Activated CD8-positive, alpha-beta T cell treated with anti-CD3 and anti-CD28 coated beads for 36 hours (primary cell): ENCODE measurements at regions of chr6 and their contacts with region 1.

Region 1: GRCh38 chr6:107704347-107705013 is 119.6 kb downstream of the SCML4 start:
- DNase-seq: peak; percentile 43
- ATAC-seq: peak; percentile 47
- H3K4me3 Mint-ChIP-seq: no peak overlapping the region
- H3K27ac Mint-ChIP-seq: peak overlapping the region; percentile 58
- H3K4me1 Mint-ChIP-seq: peaks cover 16% of the 10 kb centered on the region
- H3K27me3 Mint-ChIP-seq: no peaks in the 10 kb centered on the region
- CTCF ChIP-seq: peak; percentile 94

Region 2: DNA sequence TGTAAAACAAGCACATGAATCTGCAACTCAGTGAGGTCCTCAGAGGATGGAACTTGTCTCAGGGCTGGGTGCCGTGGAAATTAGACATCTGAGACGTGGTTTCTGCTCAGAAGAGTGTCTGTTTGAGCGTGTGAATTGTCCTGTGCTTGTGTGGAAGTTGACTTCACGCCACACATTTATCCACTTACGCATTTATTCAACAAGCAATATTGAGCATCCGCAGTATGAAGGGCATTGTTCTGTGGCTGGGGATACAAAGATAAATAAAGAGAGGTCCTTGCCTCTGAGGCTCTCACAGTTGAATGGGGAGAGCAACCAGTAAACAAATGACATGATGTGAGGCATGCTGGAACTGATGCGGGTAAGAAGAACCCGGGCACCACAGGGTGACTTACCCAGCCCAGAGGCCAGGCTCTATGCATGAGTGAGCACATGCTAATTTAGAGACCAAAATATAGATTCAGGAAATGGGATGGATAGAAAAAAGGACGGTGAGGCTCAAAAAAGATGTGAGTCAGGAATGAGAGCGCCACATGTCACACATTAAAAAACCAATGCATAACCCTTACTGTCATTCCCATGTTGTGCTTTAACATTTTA is 154.1 kb before region 1 on chr6:
- CTCF ChIA-PET with region 1: no interaction called
- POLR2A ChIA-PET with region 1: no interaction called
- intact Hi-C with region 1: no loop called
- DNase-seq: no peak
- ATAC-seq: no peak
- H3K4me3 Mint-ChIP-seq: no peak overlapping the region
- H3K27ac Mint-ChIP-seq: no peak overlapping the region
- H3K4me1 Mint-ChIP-seq: no peaks in the 10 kb centered on the region
- H3K27me3 Mint-ChIP-seq: peaks cover 3% of the 10 kb centered on the region
- CTCF ChIP-seq: no peak

Region 3: GRCh38 chr6:107674995-107675738 is 29.3 kb before region 1 on chr6:
- CTCF ChIA-PET with region 1: interaction called, 20 read pairs
- POLR2A ChIA-PET with region 1: no interaction called
- intact Hi-C with region 1: no loop called
- DNase-seq: peak; percentile 89
- ATAC-seq: peak; percentile 98
- H3K4me3 Mint-ChIP-seq: peak overlapping the region; percentile 53
- H3K27ac Mint-ChIP-seq: peak overlapping the region; percentile 91
- H3K4me1 Mint-ChIP-seq: peaks cover 16% of the 10 kb centered on the region
- H3K27me3 Mint-ChIP-seq: no peaks in the 10 kb centered on the region
- CTCF ChIP-seq: peak; percentile 91

Region 4: DNA sequence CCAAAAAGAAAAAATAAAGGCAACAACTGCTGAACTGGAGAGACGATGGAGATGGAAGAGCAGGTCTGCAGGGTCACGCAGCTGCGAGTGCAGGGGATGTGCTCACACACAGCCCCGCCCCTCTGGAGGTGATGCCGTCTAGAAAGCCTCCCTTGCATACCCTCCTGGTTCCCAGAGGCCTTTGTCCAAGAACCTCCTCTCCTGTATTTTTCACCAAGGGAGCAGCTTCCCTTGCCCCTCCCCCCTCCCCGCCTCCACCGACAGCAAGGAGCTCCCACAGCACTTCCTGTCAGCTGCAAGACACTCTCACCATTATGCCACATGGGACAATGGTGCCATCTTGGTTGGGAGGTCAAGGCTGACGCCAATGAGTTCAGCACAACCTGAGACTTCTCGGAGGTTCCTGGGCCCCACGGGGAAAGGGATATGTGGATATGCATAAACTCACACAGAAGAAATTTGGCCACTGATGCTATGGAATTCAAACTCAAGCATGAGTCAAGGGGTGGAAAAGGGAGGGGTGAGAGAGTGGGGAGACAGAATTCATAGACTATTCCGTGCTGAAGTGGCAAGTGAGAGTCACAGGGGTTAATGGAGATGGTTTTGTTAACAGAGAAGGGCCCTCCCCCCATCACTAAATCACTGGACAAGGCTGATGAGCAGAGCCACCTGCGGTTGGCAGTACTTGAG is 13.3 kb before region 1 on chr6:
- CTCF ChIA-PET with region 1: interaction called, 25 read pairs
- POLR2A ChIA-PET with region 1: interaction called, 6 read pairs
- intact Hi-C with region 1: no loop called
- DNase-seq: no peak
- ATAC-seq: no peak
- H3K4me3 Mint-ChIP-seq: no peak overlapping the region
- H3K27ac Mint-ChIP-seq: no peak overlapping the region
- H3K4me1 Mint-ChIP-seq: peaks cover 5% of the 10 kb centered on the region
- H3K27me3 Mint-ChIP-seq: no peaks in the 10 kb centered on the region
- CTCF ChIP-seq: no peak

Region 5: DNA sequence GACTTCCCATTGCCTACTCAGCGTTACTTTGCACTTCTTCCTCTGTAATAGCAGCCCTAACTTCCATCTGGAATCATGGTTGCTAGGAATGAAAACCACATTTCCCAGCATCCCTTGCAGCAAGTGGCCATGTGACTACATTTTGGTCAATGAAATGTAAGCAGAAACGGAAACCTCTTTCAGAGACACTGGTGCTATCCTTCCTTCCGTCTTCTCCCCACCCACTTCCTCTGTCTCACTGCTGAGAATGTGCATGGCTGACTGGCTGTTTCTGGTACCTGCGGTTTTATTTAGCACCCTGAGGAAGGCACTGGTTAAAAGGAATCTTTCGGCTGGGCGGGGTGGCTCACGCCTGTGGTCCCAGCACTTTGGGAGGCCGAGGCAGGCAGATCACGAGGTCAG is 12.2 kb after region 1 on chr6:
- CTCF ChIA-PET with region 1: interaction called, 17 read pairs
- POLR2A ChIA-PET with region 1: interaction called, 3 read pairs
- intact Hi-C with region 1: no loop called
- DNase-seq: peak; percentile 89
- ATAC-seq: peak; percentile 73
- H3K4me3 Mint-ChIP-seq: peak overlapping the region; percentile 49
- H3K27ac Mint-ChIP-seq: peak overlapping the region; percentile 84
- H3K4me1 Mint-ChIP-seq: peaks cover 69% of the 10 kb centered on the region
- H3K27me3 Mint-ChIP-seq: no peaks in the 10 kb centered on the region
- CTCF ChIP-seq: no peak

Region 6: DNA sequence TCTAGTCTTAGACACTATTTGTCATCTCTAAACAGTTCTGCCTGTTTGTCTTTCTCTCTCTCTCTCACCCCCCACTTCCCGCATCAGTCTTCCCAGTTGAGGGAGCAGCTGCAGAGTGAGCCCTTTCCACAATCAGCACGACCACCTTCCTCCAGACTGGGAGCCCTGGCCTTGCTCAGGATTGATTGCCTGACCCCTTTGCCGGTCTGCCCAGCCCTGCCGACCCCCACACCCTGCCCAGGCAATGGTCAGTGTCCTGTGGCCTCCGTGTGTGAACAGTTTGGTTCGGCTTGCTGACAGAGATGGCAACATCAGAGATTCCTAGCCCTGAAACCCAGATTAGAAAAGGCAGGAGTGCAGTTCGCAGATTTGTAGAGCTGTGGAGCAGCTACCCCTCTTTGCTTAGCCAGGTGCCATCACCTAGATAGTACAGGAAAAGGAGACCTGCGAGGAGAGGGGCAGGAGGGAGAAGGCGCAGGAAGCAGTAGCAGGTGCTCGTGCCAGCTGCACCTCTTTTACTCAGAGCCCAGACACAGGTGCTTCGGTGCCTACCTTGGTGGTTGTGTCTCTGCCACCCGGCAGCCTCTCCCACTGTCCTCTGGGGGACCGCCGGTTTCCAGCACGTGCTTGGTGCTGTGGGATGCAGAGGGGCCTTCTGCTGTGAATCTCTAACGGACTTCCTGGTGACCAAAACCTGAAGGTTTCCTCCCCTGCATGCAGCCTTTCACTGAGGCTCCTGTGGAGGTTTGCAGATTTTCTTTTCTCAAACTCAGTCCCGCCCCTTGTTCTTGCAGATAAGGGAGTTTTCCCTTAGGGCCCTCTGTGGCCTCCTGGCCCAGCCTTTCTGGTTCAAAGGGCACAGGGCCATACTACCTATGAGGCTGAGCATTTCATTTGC is 27.2 kb after region 1 on chr6:
- CTCF ChIA-PET with region 1: interaction called, 10 read pairs
- POLR2A ChIA-PET with region 1: no interaction called
- intact Hi-C with region 1: no loop called
- DNase-seq: peak; percentile 50
- ATAC-seq: peak; percentile 51
- H3K4me3 Mint-ChIP-seq: peak overlapping the region; percentile 89
- H3K27ac Mint-ChIP-seq: peak overlapping the region; percentile 90
- H3K4me1 Mint-ChIP-seq: peaks cover 70% of the 10 kb centered on the region
- H3K27me3 Mint-ChIP-seq: no peaks in the 10 kb centered on the region
- CTCF ChIP-seq: no peak